ENCODE measurements at regions of chr5 and their contacts with region 1.

Region 1: DNA sequence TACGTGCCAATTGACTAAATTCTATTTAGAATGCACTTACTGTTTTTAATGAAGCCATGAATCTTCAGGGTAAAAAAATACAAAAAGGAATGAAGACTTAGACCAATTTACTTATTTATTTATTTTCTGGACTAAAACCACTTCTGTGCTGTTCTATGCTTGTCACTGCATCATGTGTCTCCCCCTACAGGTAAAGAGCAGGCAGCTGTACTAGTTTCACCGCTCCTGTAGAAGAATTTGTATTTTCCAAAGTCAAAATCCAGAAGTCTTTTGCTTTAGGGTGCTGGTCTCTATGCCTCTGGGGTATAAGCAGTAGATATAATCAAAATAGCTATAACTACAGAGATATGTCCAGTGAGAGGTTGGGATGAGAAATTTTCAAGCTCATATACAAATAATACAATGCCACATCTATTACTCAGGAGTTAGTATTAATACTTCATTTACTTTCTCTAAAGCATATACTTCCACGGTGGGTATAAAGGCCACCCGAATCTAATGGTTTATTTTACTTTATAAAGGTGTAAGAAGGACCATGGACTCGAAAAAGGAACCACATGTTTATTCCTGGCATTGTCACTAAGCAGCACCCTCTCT is 591.5 kb downstream of the RAB3C start:
- DNase-seq: no peak
- ATAC-seq: peak; percentile 86
- H3K4me3 ChIP-seq: no peak overlapping the region
- H3K27ac ChIP-seq: no peak overlapping the region
- H3K4me1 ChIP-seq: no peaks in the 10 kb centered on the region
- H3K27me3 ChIP-seq: no peaks in the 10 kb centered on the region
- CTCF ChIP-seq: peak; percentile 85

Region 2: GRCh38 chr5:58571501-58571900 is 602.8 kb before region 1 on chr5:
- intact Hi-C with region 1: no loop called
- DNase-seq: no peak
- ATAC-seq: no peak
- H3K4me3 ChIP-seq: no peak overlapping the region
- H3K27ac ChIP-seq: no peak overlapping the region
- H3K4me1 ChIP-seq: no peaks in the 10 kb centered on the region
- H3K27me3 ChIP-seq: no peaks in the 10 kb centered on the region
- CTCF ChIP-seq: no peak

Region 3: DNA sequence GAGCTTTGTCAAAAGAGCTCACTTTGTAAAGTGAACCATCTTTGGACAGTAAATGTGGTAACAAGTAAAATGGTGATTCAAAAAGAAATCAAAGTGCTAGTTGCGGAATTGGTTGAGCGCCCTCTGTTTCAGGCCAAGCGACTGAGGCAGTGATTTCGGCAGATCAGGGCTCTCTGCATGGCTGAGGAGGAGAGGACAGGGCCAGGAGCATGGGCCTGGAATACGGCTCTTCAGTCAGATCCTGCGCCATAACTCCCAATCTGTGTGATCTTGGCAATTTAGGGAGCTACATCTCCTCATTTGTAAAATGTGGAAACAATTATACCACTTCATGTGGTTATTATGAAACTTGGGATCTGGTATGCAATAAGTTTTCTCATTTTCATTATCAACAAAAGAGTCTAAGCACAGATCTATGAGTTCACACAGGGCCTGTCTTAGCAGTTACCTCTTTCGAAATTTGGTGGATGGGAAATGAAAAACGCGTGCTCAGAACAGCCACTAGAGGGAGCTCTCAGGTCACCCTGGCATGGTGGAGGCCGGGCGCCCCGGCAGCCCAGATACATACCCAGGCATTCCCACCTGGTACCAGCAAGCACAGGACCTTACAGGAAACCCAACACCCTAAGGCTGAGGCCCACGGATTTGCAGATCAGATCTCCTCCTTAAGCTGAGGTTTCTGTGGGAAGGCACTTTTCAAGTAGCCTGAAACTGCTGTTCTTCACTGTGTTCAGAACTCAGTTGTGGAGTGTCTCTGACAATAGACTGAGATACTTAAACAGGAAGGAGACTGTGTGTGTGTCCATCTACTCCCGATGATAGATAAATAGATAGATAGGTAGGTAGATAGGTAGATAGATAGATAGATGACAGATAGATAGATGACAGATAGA is 287.8 kb before region 1 on chr5:
- intact Hi-C with region 1: loop called (anchors 10 kb)
- DNase-seq: peak; percentile 75
- ATAC-seq: peak; percentile 89
- H3K4me3 ChIP-seq: no peak overlapping the region
- H3K27ac ChIP-seq: peak overlapping the region; percentile 82
- H3K4me1 ChIP-seq: no peaks in the 10 kb centered on the region
- H3K27me3 ChIP-seq: no peaks in the 10 kb centered on the region
- CTCF ChIP-seq: peak; percentile 95

Region 4: DNA sequence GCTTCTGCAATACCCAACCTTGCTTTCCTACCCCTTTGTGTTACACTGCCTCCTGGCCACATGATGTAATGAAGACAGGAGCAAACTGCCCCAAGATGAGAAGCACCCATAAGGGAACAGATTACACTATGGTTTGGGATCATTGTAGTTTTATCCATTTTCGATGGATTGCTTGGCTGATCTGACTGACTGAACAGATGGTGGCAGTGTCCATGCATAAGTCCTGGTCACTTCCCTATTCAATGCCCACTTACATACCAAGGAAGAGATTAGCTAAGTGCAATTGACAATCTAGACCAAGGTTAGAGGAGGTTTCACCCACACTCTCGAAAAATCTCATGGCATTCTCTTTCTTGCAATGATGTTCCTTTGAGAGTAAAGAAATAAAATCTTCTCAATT is 271.6 kb before region 1 on chr5:
- intact Hi-C with region 1: no loop called
- DNase-seq: no peak
- ATAC-seq: peak; percentile 48
- H3K4me3 ChIP-seq: no peak overlapping the region
- H3K27ac ChIP-seq: no peak overlapping the region
- H3K4me1 ChIP-seq: peaks cover 5% of the 10 kb centered on the region
- H3K27me3 ChIP-seq: no peaks in the 10 kb centered on the region
- CTCF ChIP-seq: no peak

Region 5: DNA sequence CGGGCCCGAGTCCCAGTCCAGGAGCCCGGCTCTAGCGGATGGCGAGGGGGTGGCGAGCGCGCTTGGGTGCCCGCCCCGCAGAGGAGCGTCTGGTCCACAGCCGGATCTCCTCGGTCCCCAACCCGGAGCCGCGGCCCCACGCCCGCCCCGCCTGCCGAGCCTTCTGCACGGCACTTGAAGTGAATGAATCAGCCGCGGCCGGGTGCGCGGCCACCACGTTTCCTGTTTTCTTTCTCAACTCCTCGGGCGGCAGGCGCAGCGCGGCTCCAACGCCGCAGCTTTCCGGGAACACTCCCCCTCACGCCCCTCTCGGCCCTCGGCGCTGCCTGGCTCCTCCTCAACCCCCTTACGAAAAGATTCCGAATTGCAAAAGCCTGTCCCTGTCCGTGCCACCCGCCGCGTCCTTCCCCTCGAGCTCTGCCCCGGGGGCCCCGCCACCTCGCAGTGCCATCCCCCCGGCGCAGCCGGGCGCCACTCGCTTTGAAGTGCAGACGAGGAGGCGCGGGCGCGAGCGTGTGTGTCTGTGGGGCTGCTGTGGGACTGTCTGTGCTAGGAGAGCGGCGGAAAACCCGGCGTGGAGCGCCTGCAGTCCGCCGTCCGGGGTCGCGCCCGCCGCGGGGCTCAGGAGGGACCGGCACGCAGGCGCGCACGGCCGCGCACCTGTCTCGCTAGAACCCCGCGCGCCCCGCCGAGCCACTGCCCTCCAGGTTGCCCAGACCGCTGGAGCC is 134.9 kb before region 1 on chr5:
- intact Hi-C with region 1: loop called (anchors 10 kb)
- DNase-seq: peak; percentile 95
- ATAC-seq: peak; percentile 86
- H3K4me3 ChIP-seq: peak overlapping the region; percentile 78
- H3K27ac ChIP-seq: peak overlapping the region; percentile 85
- H3K4me1 ChIP-seq: peaks cover 20% of the 10 kb centered on the region
- H3K27me3 ChIP-seq: no peaks in the 10 kb centered on the region
- CTCF ChIP-seq: no peak

Region 6: DNA sequence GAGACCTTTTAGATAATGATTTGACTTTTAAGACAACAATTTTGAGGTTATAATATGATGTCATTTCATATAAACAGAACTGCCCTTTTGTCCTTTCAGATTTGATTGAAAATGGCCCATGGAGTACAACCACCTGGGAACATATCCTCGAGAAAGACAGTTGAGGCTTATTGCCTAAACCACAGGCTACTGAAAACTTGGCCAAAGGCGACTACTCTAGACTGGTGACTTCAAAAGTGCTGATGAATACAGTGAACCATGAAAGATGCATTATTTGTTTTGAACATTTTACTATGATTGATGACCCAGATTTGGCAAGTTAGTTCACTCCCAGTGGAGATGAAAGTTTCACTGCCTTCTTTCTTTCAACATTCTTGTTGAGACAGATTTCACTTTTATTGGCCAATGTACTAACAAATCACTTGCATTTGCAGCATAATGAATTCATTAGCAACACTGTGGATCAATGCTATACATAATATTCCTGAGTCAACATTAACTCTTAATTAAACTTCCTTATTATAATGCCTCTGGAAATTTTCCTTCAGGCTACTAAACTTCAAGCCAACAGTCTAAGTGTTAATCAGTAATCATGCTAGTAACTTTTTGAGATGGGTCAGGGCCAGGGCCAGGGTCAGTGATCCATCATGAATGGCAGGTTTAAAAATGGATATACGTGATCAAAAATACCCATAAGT is 111.2 kb before region 1 on chr5:
- intact Hi-C with region 1: no loop called
- DNase-seq: no peak
- ATAC-seq: no peak
- H3K4me3 ChIP-seq: no peak overlapping the region
- H3K27ac ChIP-seq: no peak overlapping the region
- H3K4me1 ChIP-seq: no peaks in the 10 kb centered on the region
- H3K27me3 ChIP-seq: no peaks in the 10 kb centered on the region
- CTCF ChIP-seq: no peak

Region 7: DNA sequence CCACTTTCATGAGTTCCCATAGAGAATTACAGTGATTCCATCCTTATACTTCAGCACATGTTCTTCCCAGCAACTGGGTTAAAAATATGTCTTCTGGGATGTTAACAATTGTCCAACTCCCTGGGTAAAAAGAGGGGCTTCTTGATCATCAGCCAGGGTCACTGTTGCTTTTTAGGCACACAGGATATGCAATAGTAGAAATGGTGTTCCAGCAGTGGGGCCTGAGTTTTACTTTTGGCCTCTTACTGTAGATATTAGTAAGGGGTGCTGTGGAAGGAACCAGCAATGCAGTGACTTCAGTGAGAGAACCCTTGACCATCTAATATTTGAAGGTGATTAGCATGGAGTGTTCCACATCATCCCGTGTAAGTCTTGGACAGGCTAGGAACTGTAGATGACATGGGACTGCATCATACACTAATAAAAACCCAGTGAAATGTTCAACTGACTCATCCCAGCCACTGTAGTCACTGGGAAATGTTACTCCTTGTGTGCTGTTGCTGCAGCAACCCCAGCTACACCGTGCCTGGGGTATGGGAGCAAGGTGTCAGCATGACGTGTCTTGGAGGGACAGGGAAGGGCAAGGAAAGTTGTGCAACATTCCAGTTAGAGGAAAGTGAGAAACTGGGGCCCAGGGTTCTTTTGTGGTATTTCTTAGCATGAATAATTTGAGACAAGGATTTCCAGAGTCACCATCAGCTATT is 19.4 kb after region 1 on chr5:
- intact Hi-C with region 1: no loop called
- DNase-seq: no peak
- ATAC-seq: peak; percentile 79
- H3K4me3 ChIP-seq: no peak overlapping the region
- H3K27ac ChIP-seq: no peak overlapping the region
- H3K4me1 ChIP-seq: peaks cover 8% of the 10 kb centered on the region
- H3K27me3 ChIP-seq: no peaks in the 10 kb centered on the region
- CTCF ChIP-seq: no peak